ENCODE measurements at regions of chr11 and their contacts with region 1.

Region 1: DNA sequence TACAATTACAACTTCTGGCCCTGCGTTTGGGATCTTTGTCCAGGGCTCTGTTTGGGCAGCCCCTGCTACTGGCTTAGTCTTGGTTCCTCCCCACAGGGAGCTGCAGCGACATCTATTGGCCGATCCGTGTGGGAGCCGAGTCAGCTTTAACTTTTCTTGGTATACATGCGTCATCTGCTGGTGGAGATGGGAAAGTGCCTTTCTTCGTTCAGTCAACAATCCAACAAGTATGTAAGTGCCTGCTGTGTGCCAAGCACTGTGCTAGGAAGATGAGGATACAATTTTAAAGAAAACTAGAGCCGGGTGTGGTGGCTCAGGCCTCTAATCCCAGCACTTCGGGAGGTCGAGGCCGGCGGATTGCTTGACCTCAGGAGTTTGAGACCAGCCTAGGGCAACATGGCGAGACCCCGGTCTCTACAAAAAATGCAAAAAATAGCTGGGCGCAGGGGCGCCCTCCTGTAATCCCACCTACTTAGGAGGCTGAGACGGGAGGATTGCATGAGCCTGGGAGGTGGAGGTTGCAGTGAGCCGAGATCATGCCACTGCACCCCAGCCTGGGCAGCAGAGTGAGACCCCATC is 8.2 kb downstream of the TPBGL start:
- DNase-seq: peak; percentile 65 to 93 (median 82)
- ATAC-seq: peak; percentile 92 to 97 (median 94)
- H3K4me3 ChIP-seq: no peak overlapping the region
- H3K4me3 Mint-ChIP-seq: no peak overlapping the region
- H3K27ac ChIP-seq: no peak overlapping the region
- H3K27ac Mint-ChIP-seq: no peak overlapping the region
- H3K4me1 ChIP-seq: peaks cover 0 to 7% of the 10 kb centered on the region in 2 experiments
- H3K4me1 Mint-ChIP-seq: peaks cover 0 to 7% (median 0%) of the 10 kb centered on the region in 3 donors
- H3K27me3 ChIP-seq: peaks cover 10 to 29% of the 10 kb centered on the region in 2 experiments
- H3K27me3 Mint-ChIP-seq: peaks cover 3 to 5% of the 10 kb centered on the region in 2 donors

Region 2: DNA sequence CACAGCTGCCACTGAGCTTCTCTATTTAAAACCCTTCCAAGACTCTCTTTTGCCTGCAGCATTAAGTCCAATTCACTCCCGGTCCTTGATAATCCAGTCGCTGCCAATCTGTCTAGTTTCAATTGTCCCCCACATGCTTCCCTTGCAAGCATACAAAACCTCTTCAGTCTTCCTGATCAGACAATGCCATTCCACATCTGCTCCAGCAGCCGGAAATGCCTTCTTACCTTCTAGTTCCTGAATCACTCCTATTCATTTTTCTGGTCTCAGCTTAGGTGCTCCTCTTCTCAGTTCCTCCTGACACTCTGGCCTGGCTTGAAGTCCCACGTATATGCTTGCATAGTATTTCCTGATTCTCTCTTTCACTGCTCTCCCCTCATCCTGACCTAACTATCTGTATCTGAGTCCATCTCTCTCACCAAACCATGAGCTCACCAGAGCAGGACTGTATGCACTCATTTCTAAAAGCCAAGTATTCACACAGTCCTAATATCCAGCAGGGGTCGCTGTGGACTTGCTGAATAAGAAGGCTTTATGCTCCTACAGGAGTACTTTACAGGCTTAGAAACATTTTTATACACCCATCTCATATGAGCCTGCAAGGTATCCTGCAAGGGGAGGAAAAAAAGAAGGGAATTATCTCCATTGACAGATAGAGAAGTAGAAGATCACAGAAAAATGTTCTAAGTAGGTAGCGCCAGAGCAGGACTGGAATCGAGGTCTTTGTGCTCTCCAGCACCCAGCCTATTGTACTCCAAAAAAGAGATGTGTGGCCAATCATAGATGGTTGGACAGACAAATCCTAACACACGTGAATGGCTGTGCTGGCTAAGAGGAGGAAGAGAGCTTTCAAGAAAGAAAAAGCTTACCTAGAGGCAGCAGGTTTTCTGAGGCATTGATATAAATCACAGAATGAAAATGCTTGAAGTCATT is 319.1 kb before region 1 on chr11:
- CTCF ChIA-PET with region 1: interaction called, 6 to 15 read pairs
- POLR2A ChIA-PET with region 1: no interaction called
- DNase-seq: peak; percentile 4 to 89 (median 52)
- ATAC-seq: peak; percentile 72 to 84 (median 78)
- H3K4me3 ChIP-seq: no peak overlapping the region
- H3K4me3 Mint-ChIP-seq: no peak overlapping the region
- H3K27ac ChIP-seq: no peak overlapping the region
- H3K27ac Mint-ChIP-seq: no peak overlapping the region
- H3K4me1 ChIP-seq: no peaks in the 10 kb centered on the region
- H3K4me1 Mint-ChIP-seq: no peaks in the 10 kb centered on the region
- H3K27me3 ChIP-seq: no peaks in the 10 kb centered on the region
- H3K27me3 Mint-ChIP-seq: no peaks in the 10 kb centered on the region

Region 3: GRCh38 chr11:75004215-75004614 is 244.6 kb before region 1 on chr11:
- CTCF ChIA-PET with region 1: interaction called in 1 of 2 experiments, 10 read pairs
- POLR2A ChIA-PET with region 1: no interaction called
- DNase-seq: no peak
- ATAC-seq: no peak
- H3K4me3 ChIP-seq: no peak overlapping the region
- H3K4me3 Mint-ChIP-seq: no peak overlapping the region
- H3K27ac ChIP-seq: no peak overlapping the region
- H3K27ac Mint-ChIP-seq: no peak overlapping the region
- H3K4me1 ChIP-seq: no peaks in the 10 kb centered on the region
- H3K4me1 Mint-ChIP-seq: peaks cover 0 to 1% (median 0%) of the 10 kb centered on the region in 3 donors
- H3K27me3 ChIP-seq: no peaks in the 10 kb centered on the region
- H3K27me3 Mint-ChIP-seq: no peaks in the 10 kb centered on the region

Region 4: DNA sequence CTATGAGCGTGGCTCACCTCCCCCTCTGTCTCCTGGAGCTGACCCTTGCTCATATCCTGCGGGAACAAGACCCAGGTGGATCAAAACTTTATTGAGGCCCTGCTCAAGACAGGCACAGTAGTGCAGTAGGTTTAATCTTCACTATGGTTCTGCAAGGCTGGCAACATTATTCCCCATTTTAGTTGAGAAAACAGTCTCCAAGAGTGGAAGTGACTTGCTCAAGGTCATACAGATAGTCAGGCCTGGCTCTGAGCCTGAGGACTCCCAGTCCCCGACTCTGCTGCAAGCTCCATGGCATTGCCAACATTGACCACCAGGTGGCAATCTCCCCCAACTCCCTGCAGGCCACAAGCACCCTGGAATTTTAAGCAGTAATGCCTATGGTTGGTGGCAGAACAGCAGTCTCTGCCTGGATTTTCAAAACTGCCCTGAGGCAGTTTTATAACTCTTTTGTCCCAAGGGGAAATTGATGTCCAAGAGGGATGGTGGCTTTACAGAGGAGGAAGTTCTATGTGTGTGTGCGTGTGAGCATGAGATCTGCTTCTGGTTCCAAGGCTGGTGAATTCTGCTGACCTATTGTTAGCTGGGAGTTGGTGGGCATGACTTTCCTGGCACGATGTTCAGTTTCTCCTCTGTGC is 225.9 kb before region 1 on chr11:
- CTCF ChIA-PET with region 1: interaction called, 4 to 22 read pairs
- POLR2A ChIA-PET with region 1: no interaction called
- DNase-seq: peak; percentile 30 to 83 (median 62)
- ATAC-seq: peak; percentile 75 to 89 (median 84)
- H3K4me3 ChIP-seq: no peak overlapping the region
- H3K4me3 Mint-ChIP-seq: no peak overlapping the region
- H3K27ac ChIP-seq: no peak overlapping the region
- H3K27ac Mint-ChIP-seq: no peak overlapping the region
- H3K4me1 ChIP-seq: no peaks in the 10 kb centered on the region
- H3K4me1 Mint-ChIP-seq: no peaks in the 10 kb centered on the region
- H3K27me3 ChIP-seq: no peaks in the 10 kb centered on the region
- H3K27me3 Mint-ChIP-seq: no peaks in the 10 kb centered on the region

Region 5: GRCh38 chr11:75142714-75143419 is 105.9 kb before region 1 on chr11:
- CTCF ChIA-PET with region 1: interaction called, 33 to 103 read pairs
- POLR2A ChIA-PET with region 1: interaction called in 1 of 2 experiments, 3 read pairs
- DNase-seq: peak; percentile 28 to 79 (median 49)
- ATAC-seq: peak; percentile 92 to 96 (median 96)
- H3K4me3 ChIP-seq: no peak overlapping the region
- H3K4me3 Mint-ChIP-seq: peak overlapping the region; percentile 35 to 61 (median 44)
- H3K27ac ChIP-seq: peak overlapping the region; percentile 50
- H3K27ac Mint-ChIP-seq: peak overlapping the region; percentile 92 to 96
- H3K4me1 ChIP-seq: peaks cover 11 to 40% of the 10 kb centered on the region in 2 experiments
- H3K4me1 Mint-ChIP-seq: peaks cover 40 to 46% (median 41%) of the 10 kb centered on the region in 3 donors
- H3K27me3 ChIP-seq: no peaks in the 10 kb centered on the region
- H3K27me3 Mint-ChIP-seq: peaks cover 3 to 4% of the 10 kb centered on the region in 2 donors

Region 6: GRCh38 chr11:75263944-75264349 is 15.2 kb after region 1 on chr11:
- CTCF ChIA-PET with region 1: interaction called, 6 to 13 read pairs
- POLR2A ChIA-PET with region 1: no interaction called
- DNase-seq: peak in 3 of 35 experiments; percentile 18 to 30 (median 26)
- ATAC-seq: peak in 3 of 4 experiments; percentile 31 to 44 (median 34)
- H3K4me3 ChIP-seq: no peak overlapping the region
- H3K4me3 Mint-ChIP-seq: no peak overlapping the region
- H3K27ac ChIP-seq: peak overlapping the region; percentile 20
- H3K27ac Mint-ChIP-seq: peak overlapping the region; percentile 86 to 93
- H3K4me1 ChIP-seq: peaks cover 22 to 54% of the 10 kb centered on the region in 2 experiments
- H3K4me1 Mint-ChIP-seq: peaks cover 43 to 54% (median 51%) of the 10 kb centered on the region in 3 donors
- H3K27me3 ChIP-seq: no peaks in the 10 kb centered on the region
- H3K27me3 Mint-ChIP-seq: no peaks in the 10 kb centered on the region

Region 7: GRCh38 chr11:75270896-75271418 is 22.2 kb after region 1 on chr11:
- CTCF ChIA-PET with region 1: interaction called, 4 to 16 read pairs
- POLR2A ChIA-PET with region 1: interaction called in 1 of 2 experiments, 3 read pairs
- DNase-seq: peak in 16 of 35 experiments; percentile 6 to 61 (median 27)
- ATAC-seq: no peak
- H3K4me3 ChIP-seq: no peak overlapping the region
- H3K4me3 Mint-ChIP-seq: peak overlapping the region in 1 of 3 donors; percentile 37
- H3K27ac ChIP-seq: no peak overlapping the region
- H3K27ac Mint-ChIP-seq: peak overlapping the region; percentile 97 to 99
- H3K4me1 ChIP-seq: peaks cover 25 to 45% of the 10 kb centered on the region in 2 experiments
- H3K4me1 Mint-ChIP-seq: peaks cover 35 to 48% (median 37%) of the 10 kb centered on the region in 3 donors
- H3K27me3 ChIP-seq: no peaks in the 10 kb centered on the region
- H3K27me3 Mint-ChIP-seq: no peaks in the 10 kb centered on the region

Region 8: GRCh38 chr11:76096552-76096951 is 847.8 kb after region 1 on chr11:
- CTCF ChIA-PET with region 1: no interaction called
- POLR2A ChIA-PET with region 1: no interaction called
- DNase-seq: no peak
- ATAC-seq: no peak
- H3K4me3 ChIP-seq: no peak overlapping the region
- H3K4me3 Mint-ChIP-seq: no peak overlapping the region
- H3K27ac ChIP-seq: no peak overlapping the region
- H3K27ac Mint-ChIP-seq: no peak overlapping the region
- H3K4me1 ChIP-seq: no peaks in the 10 kb centered on the region
- H3K4me1 Mint-ChIP-seq: peaks cover 2 to 8% (median 3%) of the 10 kb centered on the region in 3 donors
- H3K27me3 ChIP-seq: no peaks in the 10 kb centered on the region
- H3K27me3 Mint-ChIP-seq: no peaks in the 10 kb centered on the region

Region 9: GRCh38 chr11:76642341-76642740 is 1393.6 kb after region 1 on chr11:
- CTCF ChIA-PET with region 1: no interaction called
- POLR2A ChIA-PET with region 1: no interaction called
- DNase-seq: peak in 2 of 35 experiments; percentile 37
- ATAC-seq: peak in 1 of 4 experiments; percentile 74
- H3K4me3 ChIP-seq: no peak overlapping the region
- H3K4me3 Mint-ChIP-seq: no peak overlapping the region
- H3K27ac ChIP-seq: no peak overlapping the region
- H3K27ac Mint-ChIP-seq: no peak overlapping the region
- H3K4me1 ChIP-seq: peaks cover 0 to 2% of the 10 kb centered on the region in 2 experiments
- H3K4me1 Mint-ChIP-seq: peaks cover 0 to 11% (median 0%) of the 10 kb centered on the region in 3 donors
- H3K27me3 ChIP-seq: peaks cover 0 to 44% of the 10 kb centered on the region in 2 experiments
- H3K27me3 Mint-ChIP-seq: peaks cover 24 to 50% of the 10 kb centered on the region in 2 donors

Measured in T-cell (primary cell).